HepG2 (cell line): ENCODE measurements at regions of chr2 and their contacts with region 1.

Region 1: DNA sequence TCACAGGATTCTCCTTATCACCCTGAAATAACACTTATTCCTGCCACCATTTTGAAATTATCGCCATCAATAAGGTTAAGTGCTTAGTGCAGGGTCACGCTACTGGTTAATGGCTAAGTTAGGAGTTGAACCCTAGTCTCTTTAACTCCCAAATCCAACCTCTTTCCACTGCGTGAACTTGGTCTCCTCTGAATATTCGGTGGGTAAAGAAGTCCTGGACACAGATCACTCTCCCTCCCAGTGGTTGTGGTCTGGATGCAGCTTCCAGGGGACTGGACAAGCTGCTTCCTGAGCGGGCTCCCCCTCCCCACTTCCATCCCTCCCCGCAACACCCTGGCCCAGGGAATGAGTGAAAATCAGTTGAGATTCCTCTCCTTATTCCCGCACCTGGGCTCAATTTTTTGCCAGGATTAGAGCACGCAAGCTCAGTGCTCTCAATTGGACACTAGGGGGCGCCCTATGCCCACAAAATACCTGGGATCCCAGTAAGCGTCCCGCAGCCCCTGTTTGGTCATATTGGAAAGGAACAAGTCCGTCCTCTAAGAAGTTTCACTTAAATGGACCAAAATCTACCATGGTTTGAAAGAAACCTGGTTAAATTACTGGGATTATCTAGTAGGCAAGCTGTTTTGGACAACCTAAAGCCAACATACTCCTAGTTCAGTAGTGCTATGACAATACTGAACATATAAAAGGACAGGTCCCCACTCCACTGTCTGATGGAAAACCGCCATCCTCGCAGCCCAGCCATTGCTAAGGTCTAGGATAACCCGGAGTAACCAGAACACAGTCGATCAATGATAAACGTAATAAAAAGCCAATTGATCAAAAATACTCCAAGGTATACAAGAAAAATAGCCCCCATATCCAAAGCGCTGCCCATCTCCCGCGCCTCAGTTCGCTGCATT is 40.4 kb downstream of the DHRS9 start:
- DNase-seq: peak; percentile 73
- ATAC-seq: peak; percentile 98
- H3K4me3 ChIP-seq: no peak overlapping the region
- H3K27ac ChIP-seq: no peak overlapping the region
- H3K4me1 ChIP-seq: no peaks in the 10 kb centered on the region
- H3K27me3 ChIP-seq: peaks cover 4 to 20% of the 10 kb centered on the region in 2 experiments; a peak in 3 of 5 replicates
- CTCF ChIP-seq: peak; percentile 92
- EP300 ChIP-seq: no peak
- POLR2A ChIP-seq: no peak
- RAD21 ChIP-seq: peak; percentile 85

Region 2: GRCh38 chr2:169018390-169018789 is 91.4 kb before region 1 on chr2:
- CTCF ChIA-PET with region 1: no interaction called
- POLR2A ChIA-PET with region 1: no interaction called
- in situ Hi-C with region 1: no loop called
- intact Hi-C with region 1: no loop called
- DNase-seq: no peak
- ATAC-seq: no peak
- H3K4me3 ChIP-seq: no peak overlapping the region
- H3K27ac ChIP-seq: no peak overlapping the region
- H3K4me1 ChIP-seq: peaks cover under 1% of the 10 kb centered on the region; the same call in 1 of the 2 replicates
- H3K27me3 ChIP-seq: no peaks in the 10 kb centered on the region
- CTCF ChIP-seq: no peak
- EP300 ChIP-seq: no peak
- POLR2A ChIP-seq: no peak
- RAD21 ChIP-seq: no peak

Region 3: DNA sequence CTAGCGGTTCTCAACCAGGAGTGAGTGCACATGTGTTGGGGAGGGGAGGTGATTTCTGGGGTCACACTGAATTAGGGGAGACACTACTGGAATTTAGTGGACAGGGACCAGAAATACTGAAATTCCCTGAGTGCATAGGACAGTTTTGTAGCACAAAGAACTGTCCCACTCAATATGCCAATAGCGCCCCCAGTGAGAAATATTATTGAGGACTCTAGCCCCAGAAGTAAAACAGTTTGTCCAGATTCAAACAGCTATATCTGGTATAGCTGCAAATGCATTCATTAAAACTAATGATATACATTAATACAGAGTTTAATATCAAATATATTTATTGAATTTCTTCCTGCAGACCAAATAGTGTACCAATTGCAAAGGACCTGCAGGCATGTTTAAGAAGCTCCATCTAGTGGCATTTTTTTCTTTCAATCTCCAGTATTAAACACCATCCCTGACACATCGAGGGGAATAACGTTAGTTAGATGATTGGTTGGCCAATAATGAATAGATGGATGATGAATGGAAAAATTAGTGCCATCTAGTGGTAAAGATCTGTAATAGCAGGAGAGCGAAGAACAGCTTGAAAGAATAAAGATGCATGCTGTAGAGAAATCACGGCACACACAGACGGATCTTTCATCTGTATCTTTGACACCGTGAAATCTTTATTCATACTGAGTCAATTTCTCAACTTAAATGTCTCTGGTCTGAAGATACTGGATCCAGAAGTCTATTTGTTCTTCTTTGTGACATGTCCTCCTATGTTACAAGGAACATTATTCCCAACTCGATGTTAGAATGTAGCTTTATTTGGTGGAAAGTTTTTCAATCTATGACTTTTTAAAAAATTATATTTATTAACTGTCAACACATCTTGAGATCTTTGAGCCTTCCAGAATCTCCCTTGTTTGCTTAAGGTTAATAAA is 22.1 kb after region 1 on chr2:
- CTCF ChIA-PET with region 1: interaction called, 19 read pairs
- POLR2A ChIA-PET with region 1: no interaction called
- in situ Hi-C with region 1: no loop called
- intact Hi-C with region 1: loop called (anchors 2 kb)
- DNase-seq: peak; percentile 40
- ATAC-seq: peak; percentile 59
- H3K4me3 ChIP-seq: no peak overlapping the region
- H3K27ac ChIP-seq: no peak overlapping the region
- H3K4me1 ChIP-seq: no peaks in the 10 kb centered on the region
- H3K27me3 ChIP-seq: peaks cover 0 to 11% of the 10 kb centered on the region in 2 experiments; a peak in 3 of 5 replicates
- CTCF ChIP-seq: peak; percentile 79
- EP300 ChIP-seq: no peak
- POLR2A ChIP-seq: no peak
- RAD21 ChIP-seq: no peak

Region 4: DNA sequence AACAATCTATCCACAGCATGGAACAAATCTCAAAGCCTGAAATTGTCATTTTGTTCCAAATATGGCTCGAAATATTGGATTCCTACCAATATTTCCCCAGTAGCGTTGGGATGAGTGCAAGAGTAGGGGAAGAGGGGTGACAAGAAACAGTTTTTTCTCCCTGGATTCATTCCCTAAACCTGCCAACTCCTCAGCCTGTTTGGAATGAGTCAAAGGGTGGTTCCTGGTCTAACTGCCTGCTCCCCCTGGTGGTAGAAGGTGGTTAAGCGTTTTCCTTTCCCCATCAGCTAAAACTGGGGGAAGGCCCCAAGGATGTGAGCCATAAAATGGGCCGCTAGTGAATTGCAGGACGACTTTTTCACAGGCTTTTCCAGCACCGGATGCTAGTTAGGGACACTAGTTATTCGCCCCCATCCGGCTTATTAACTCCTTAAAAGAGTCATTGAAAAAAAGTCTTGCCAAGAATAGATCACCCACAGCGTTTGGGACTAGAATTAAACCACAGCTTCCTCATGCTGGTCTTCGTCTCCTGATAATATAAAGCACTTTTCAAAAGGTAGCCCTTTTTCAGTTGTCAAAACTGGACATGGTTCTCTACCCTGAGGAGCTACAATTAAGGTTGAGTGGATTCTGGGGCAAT is 32.1 kb after region 1 on chr2:
- CTCF ChIA-PET with region 1: interaction called, 32 read pairs
- POLR2A ChIA-PET with region 1: no interaction called
- in situ Hi-C with region 1: loop called (anchors 5 kb)
- intact Hi-C with region 1: loop called (anchors 1 kb)
- DNase-seq: peak; percentile 46
- ATAC-seq: peak; percentile 92
- H3K4me3 ChIP-seq: no peak overlapping the region
- H3K27ac ChIP-seq: no peak overlapping the region
- H3K4me1 ChIP-seq: no peaks in the 10 kb centered on the region
- H3K27me3 ChIP-seq: peaks cover 3 to 20% of the 10 kb centered on the region in 2 experiments; a peak in 4 of 5 replicates
- CTCF ChIP-seq: peak; percentile 84
- EP300 ChIP-seq: no peak
- POLR2A ChIP-seq: no peak
- RAD21 ChIP-seq: 0 out of 2 replicates have a peak, but pooled peaks have one; percentile 13

Region 5: GRCh38 chr2:169159686-169160085 is 49.9 kb after region 1 on chr2:
- CTCF ChIA-PET with region 1: no interaction called
- POLR2A ChIA-PET with region 1: no interaction called
- in situ Hi-C with region 1: no loop called
- intact Hi-C with region 1: no loop called
- DNase-seq: no peak
- ATAC-seq: no peak
- H3K4me3 ChIP-seq: no peak overlapping the region
- H3K27ac ChIP-seq: no peak overlapping the region
- H3K4me1 ChIP-seq: no peaks in the 10 kb centered on the region
- H3K27me3 ChIP-seq: no peaks in the 10 kb centered on the region; a peak in 1 of 5 replicates
- CTCF ChIP-seq: no peak
- EP300 ChIP-seq: no peak
- POLR2A ChIP-seq: no peak
- RAD21 ChIP-seq: no peak

Region 6: DNA sequence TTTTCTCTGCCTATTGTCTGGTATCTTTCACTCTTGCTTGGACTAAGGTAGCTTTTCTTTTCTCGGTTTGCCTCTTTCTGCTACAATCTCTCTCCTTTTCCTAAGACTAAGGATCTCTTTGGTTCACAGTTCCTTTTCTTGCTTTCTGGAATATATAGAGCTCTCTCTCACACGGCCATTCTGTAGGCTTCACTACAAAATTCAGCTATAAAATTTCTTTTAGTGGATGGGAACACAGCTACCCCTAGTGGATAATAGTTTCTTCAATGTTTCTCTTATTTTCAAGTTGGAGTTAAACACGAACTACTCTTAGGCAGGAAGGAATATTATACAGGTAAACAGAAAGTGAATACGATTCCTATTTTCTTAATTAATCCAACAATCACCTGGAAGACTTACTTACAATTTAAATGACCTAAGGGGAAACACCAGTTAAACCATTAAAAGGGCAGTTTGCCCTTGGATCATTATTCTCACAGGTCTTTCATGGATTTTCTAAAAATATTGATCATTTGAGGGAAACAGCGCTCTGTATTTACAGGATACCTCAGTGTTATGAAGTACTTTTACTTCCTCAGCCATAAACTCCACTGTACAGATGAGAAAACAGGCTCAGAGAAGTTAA is 112.1 kb after region 1 on chr2:
- CTCF ChIA-PET with region 1: no interaction called
- POLR2A ChIA-PET with region 1: no interaction called
- in situ Hi-C with region 1: no loop called
- intact Hi-C with region 1: loop called (anchors 1 kb)
- DNase-seq: no peak
- ATAC-seq: peak; percentile 63
- H3K4me3 ChIP-seq: no peak overlapping the region
- H3K27ac ChIP-seq: no peak overlapping the region
- H3K4me1 ChIP-seq: no peaks in the 10 kb centered on the region
- H3K27me3 ChIP-seq: no peaks in the 10 kb centered on the region
- CTCF ChIP-seq: peak; percentile 21
- EP300 ChIP-seq: no peak
- POLR2A ChIP-seq: no peak
- RAD21 ChIP-seq: no peak

Region 7: GRCh38 chr2:169275696-169276444 is 166.1 kb after region 1 on chr2:
- CTCF ChIA-PET with region 1: interaction called, 3 read pairs
- POLR2A ChIA-PET with region 1: no interaction called
- in situ Hi-C with region 1: no loop called
- intact Hi-C with region 1: loop called (anchors 5 kb)
- DNase-seq: no peak
- ATAC-seq: no peak
- H3K4me3 ChIP-seq: no peak overlapping the region
- H3K27ac ChIP-seq: no peak overlapping the region
- H3K4me1 ChIP-seq: no peaks in the 10 kb centered on the region
- H3K27me3 ChIP-seq: peaks cover 0 to 6% of the 10 kb centered on the region in 2 experiments; a peak in 2 of 5 replicates
- CTCF ChIP-seq: peak; percentile 33
- EP300 ChIP-seq: no peak
- POLR2A ChIP-seq: no peak
- RAD21 ChIP-seq: no peak

Region 8: GRCh38 chr2:169397697-169398096 is 287.9 kb after region 1 on chr2:
- CTCF ChIA-PET with region 1: no interaction called
- POLR2A ChIA-PET with region 1: no interaction called
- in situ Hi-C with region 1: loop called (anchors 5 kb)
- intact Hi-C with region 1: loop called (anchors 1 kb)
- DNase-seq: no peak
- ATAC-seq: no peak
- H3K4me3 ChIP-seq: no peak overlapping the region
- H3K27ac ChIP-seq: no peak overlapping the region
- H3K4me1 ChIP-seq: no peaks in the 10 kb centered on the region
- H3K27me3 ChIP-seq: peaks cover 0 to 28% of the 10 kb centered on the region in 2 experiments; a peak in 3 of 5 replicates
- CTCF ChIP-seq: peak; percentile 46
- EP300 ChIP-seq: no peak
- POLR2A ChIP-seq: no peak
- RAD21 ChIP-seq: no peak